HepG2 (cell line): ENCODE measurements at regions of chr16 and their contacts with region 1.

Region 1: GRCh38 chr16:14364386-14365204 is 265.5 kb downstream of the PARN start:
- DNase-seq: peak; percentile 99
- ATAC-seq: peak; percentile 85
- H3K4me3 ChIP-seq: peak overlapping the region; percentile 46 to 61 (median 49)
- H3K27ac ChIP-seq: peak overlapping the region; percentile 59
- H3K4me1 ChIP-seq: peaks cover 57% of the 10 kb centered on the region
- H3K27me3 ChIP-seq: no peaks in the 10 kb centered on the region
- CTCF ChIP-seq: peak; percentile 71
- EP300 ChIP-seq: peak; percentile 94 to 97
- POLR2A ChIP-seq: no peak; a peak in 1 of 4 replicates
- RAD21 ChIP-seq: peak; percentile 46

Region 2: GRCh38 chr16:14315683-14316320 is 48.8 kb before region 1 on chr16:
- CTCF ChIA-PET with region 1: no interaction called
- POLR2A ChIA-PET with region 1: no interaction called
- in situ Hi-C with region 1: no loop called
- intact Hi-C with region 1: loop called (anchors 5 kb)
- DNase-seq: peak; percentile 72
- ATAC-seq: peak; percentile 27
- H3K4me3 ChIP-seq: no peak overlapping the region
- H3K27ac ChIP-seq: peak overlapping the region; percentile 1
- H3K4me1 ChIP-seq: peaks cover 53% of the 10 kb centered on the region
- H3K27me3 ChIP-seq: no peaks in the 10 kb centered on the region
- CTCF ChIP-seq: no peak
- EP300 ChIP-seq: peak in 1 of 2 experiments; percentile 26; a peak in 1 of 4 replicates
- POLR2A ChIP-seq: no peak
- RAD21 ChIP-seq: no peak

Region 3: GRCh38 chr16:14384745-14385144 is 20.1 kb after region 1 on chr16:
- CTCF ChIA-PET with region 1: no interaction called
- POLR2A ChIA-PET with region 1: no interaction called
- in situ Hi-C with region 1: no loop called
- intact Hi-C with region 1: loop called (anchors 2 kb)
- DNase-seq: no peak
- ATAC-seq: no peak
- H3K4me3 ChIP-seq: no peak overlapping the region
- H3K27ac ChIP-seq: peak overlapping the region; percentile 50
- H3K4me1 ChIP-seq: peaks cover 34% of the 10 kb centered on the region
- H3K27me3 ChIP-seq: no peaks in the 10 kb centered on the region
- CTCF ChIP-seq: no peak
- EP300 ChIP-seq: no peak
- POLR2A ChIP-seq: no peak
- RAD21 ChIP-seq: no peak

Region 4: GRCh38 chr16:14399378-14400284 is 35.0 kb after region 1 on chr16:
- CTCF ChIA-PET with region 1: no interaction called
- POLR2A ChIA-PET with region 1: interaction called, 5 read pairs
- in situ Hi-C with region 1: no loop called
- intact Hi-C with region 1: loop called (anchors 2 kb)
- DNase-seq: peak; percentile 99
- ATAC-seq: peak; percentile 88
- H3K4me3 ChIP-seq: peak overlapping the region; percentile 31 to 67 (median 47)
- H3K27ac ChIP-seq: peak overlapping the region; percentile 95
- H3K4me1 ChIP-seq: peaks cover 96% of the 10 kb centered on the region
- H3K27me3 ChIP-seq: no peaks in the 10 kb centered on the region
- CTCF ChIP-seq: 0 out of 2 replicates have a peak, but pooled peaks have one; percentile 28
- EP300 ChIP-seq: peak; percentile 90 to 96
- POLR2A ChIP-seq: peak; percentile 82 to 84
- RAD21 ChIP-seq: no peak

Region 5: DNA sequence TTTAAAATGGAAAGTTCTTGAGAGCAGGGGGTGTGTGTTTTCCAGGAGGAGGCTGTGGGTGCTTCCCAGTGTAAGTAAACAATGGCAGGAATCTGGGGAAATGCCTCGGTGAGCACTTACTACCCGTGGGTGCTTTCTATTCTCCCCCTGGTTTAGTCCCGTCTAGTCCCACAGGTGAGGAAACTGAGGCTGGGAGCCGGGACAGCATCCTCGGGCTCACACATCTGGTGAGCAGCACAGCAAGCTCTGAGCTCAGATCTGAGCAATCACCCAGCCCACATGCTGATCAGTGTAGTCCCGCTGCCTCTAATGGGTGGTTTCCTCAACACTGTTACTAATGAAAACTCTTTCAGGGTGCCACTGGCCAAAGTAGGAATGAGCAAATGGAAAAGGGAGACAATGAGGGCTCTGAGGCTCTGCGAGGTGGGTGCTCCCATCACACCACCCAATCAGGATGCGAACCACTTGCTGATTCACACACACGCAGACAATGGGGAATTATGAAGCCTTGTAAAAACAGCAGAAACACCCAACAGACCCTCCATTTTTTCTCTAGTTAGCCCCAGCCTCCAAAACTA is 62.9 kb after region 1 on chr16:
- CTCF ChIA-PET with region 1: no interaction called
- POLR2A ChIA-PET with region 1: no interaction called
- in situ Hi-C with region 1: no loop called
- intact Hi-C with region 1: no loop called
- DNase-seq: no peak
- ATAC-seq: peak; percentile 33
- H3K4me3 ChIP-seq: no peak overlapping the region
- H3K27ac ChIP-seq: no peak overlapping the region
- H3K4me1 ChIP-seq: peaks cover 19% of the 10 kb centered on the region
- H3K27me3 ChIP-seq: no peaks in the 10 kb centered on the region
- CTCF ChIP-seq: no peak
- EP300 ChIP-seq: no peak
- POLR2A ChIP-seq: no peak
- RAD21 ChIP-seq: no peak